Heart right ventricle (tissue), 16 donors: ENCODE measurements at regions of chr2 and their contacts with region 1.

Region 1: GRCh38 chr2:239495791-239496233 is 95.0 kb upstream of the HDAC4 start:
- DNase-seq: no peak
- ATAC-seq: peak in 2 of 8 donors; percentile 57 to 73
- H3K4me3 ChIP-seq: no peak overlapping the region
- H3K27ac ChIP-seq: no peak overlapping the region
- H3K4me1 ChIP-seq: peaks cover 0 to 21% (median 0%) of the 10 kb centered on the region in 9 donors
- H3K27me3 ChIP-seq: peaks cover 0 to 46% (median 0%) of the 10 kb centered on the region in 7 donors
- CTCF ChIP-seq: no peak

Region 2: GRCh38 chr2:239216614-239217273 is 279.1 kb before region 1 on chr2:
- intact Hi-C with region 1: no loop called
- DNase-seq: no peak
- ATAC-seq: peak in 1 of 8 donors; percentile 26
- H3K4me3 ChIP-seq: no peak overlapping the region
- H3K27ac ChIP-seq: peak overlapping the region in 1 of 10 donors; percentile 8
- H3K4me1 ChIP-seq: peaks cover 8 to 60% (median 33%) of the 10 kb centered on the region in 9 donors
- H3K27me3 ChIP-seq: no peaks in the 10 kb centered on the region
- CTCF ChIP-seq: no peak

Region 3: GRCh38 chr2:239440511-239440959 is 55.3 kb before region 1 on chr2:
- intact Hi-C with region 1: loop called in 1 of 10 experiments (anchors 2 kb)
- DNase-seq: no peak
- ATAC-seq: peak in 2 of 8 donors; percentile 34 to 36
- H3K4me3 ChIP-seq: peak overlapping the region in 6 of 10 donors; percentile 4 to 34 (median 24)
- H3K27ac ChIP-seq: no peak overlapping the region
- H3K4me1 ChIP-seq: peaks cover 3 to 66% (median 14%) of the 10 kb centered on the region in 9 donors
- H3K27me3 ChIP-seq: peaks cover 4 to 47% (median 28%) of the 10 kb centered on the region in 7 donors
- CTCF ChIP-seq: no peak

Region 4: GRCh38 chr2:239482778-239483712 is 12.8 kb before region 1 on chr2:
- intact Hi-C with region 1: no loop called
- DNase-seq: no peak
- ATAC-seq: no peak
- H3K4me3 ChIP-seq: no peak overlapping the region
- H3K27ac ChIP-seq: no peak overlapping the region
- H3K4me1 ChIP-seq: no peaks in the 10 kb centered on the region
- H3K27me3 ChIP-seq: peaks cover 0 to 31% (median 9%) of the 10 kb centered on the region in 7 donors
- CTCF ChIP-seq: no peak

Region 5: GRCh38 chr2:239569401-239570090 is 73.7 kb after region 1 on chr2:
- intact Hi-C with region 1: no loop called
- DNase-seq: no peak
- ATAC-seq: no peak
- H3K4me3 ChIP-seq: no peak overlapping the region
- H3K27ac ChIP-seq: no peak overlapping the region
- H3K4me1 ChIP-seq: no peaks in the 10 kb centered on the region
- H3K27me3 ChIP-seq: peaks cover 7 to 71% (median 35%) of the 10 kb centered on the region in 7 donors
- CTCF ChIP-seq: no peak